MCF 10A (cell line): ENCODE measurements at regions of chr22 and their contacts with region 1.

Region 1: GRCh38 chr22:24244101-24244787 is 638 bp downstream of the GGT5 start:
- DNase-seq: peak; percentile 63
- H3K4me3 Mint-ChIP-seq: peak overlapping the region; percentile 64
- H3K27ac Mint-ChIP-seq: peak overlapping the region; percentile 31
- H3K4me1 Mint-ChIP-seq: peaks cover 33% of the 10 kb centered on the region
- H3K27me3 Mint-ChIP-seq: no peaks in the 10 kb centered on the region
- CTCF ChIP-seq: no peak

Region 2: DNA sequence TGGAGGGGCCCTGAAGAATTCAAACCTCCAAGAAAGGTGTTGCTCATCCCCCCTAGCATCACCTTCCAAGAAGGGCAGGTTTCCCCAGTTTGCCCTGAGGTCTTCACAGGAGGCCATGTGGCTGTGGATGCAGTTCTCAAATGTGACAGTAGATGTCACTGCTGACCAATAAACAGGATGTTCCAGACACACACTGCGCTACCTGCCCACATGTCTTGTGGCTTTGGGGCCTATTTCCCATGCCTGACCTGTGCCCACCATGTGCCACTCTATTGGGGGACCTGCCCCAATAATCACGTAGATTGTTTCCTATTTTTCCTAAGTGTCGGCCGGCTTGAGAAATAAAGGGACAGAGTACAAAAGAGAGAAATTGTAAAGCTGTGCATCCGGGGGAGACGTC is 259.8 kb before region 1 on chr22:
- CTCF ChIA-PET with region 1: no interaction called
- POLR2A ChIA-PET with region 1: no interaction called
- intact Hi-C with region 1: loop called (anchors 10 kb)
- DNase-seq: peak; percentile 65
- H3K4me3 Mint-ChIP-seq: no peak overlapping the region
- H3K27ac Mint-ChIP-seq: no peak overlapping the region
- H3K4me1 Mint-ChIP-seq: no peaks in the 10 kb centered on the region
- H3K27me3 Mint-ChIP-seq: no peaks in the 10 kb centered on the region
- CTCF ChIP-seq: peak; percentile 81